HEK293 (cell line): ENCODE measurements at regions of chr21 and their contacts with region 1.

Region 1: DNA sequence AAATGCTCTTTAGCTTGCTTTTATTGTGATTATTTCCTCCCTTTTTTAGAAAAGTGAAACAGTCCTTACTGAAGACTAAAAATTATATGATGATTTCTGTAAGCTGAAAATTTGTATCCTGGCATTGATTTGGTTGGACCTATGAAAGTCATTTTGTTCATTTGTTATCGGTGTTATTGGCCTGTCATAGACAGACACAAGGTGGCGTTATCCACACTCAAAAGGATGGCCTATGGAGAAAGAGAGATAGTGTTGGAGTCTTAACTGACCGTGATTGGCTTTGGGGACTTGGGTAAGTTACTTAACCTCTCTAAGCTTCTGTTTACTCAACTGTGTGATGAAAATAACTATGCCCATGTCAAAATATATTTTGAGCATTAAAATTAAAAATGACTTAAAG is 203.6 kb upstream of the CHODL start:
- H3K4me3 ChIP-seq: no peak overlapping the region
- H3K27ac ChIP-seq: no peak overlapping the region
- H3K4me1 ChIP-seq: no peaks in the 10 kb centered on the region
- CTCF ChIP-seq: no peak

Region 2: GRCh38 chr21:18030248-18030647 is 10.8 kb before region 1 on chr21:
- CTCF ChIA-PET with region 1: interaction called, 13 read pairs
- POLR2A ChIA-PET with region 1: no interaction called
- H3K4me3 ChIP-seq: no peak overlapping the region
- H3K27ac ChIP-seq: no peak overlapping the region
- H3K4me1 ChIP-seq: no peaks in the 10 kb centered on the region
- CTCF ChIP-seq: no peak

Region 3: GRCh38 chr21:18053151-18053550 is 12.1 kb after region 1 on chr21:
- CTCF ChIA-PET with region 1: interaction called, 11 read pairs
- POLR2A ChIA-PET with region 1: no interaction called
- H3K4me3 ChIP-seq: no peak overlapping the region
- H3K27ac ChIP-seq: no peak overlapping the region
- H3K4me1 ChIP-seq: no peaks in the 10 kb centered on the region
- CTCF ChIP-seq: no peak

Region 4: GRCh38 chr21:18666725-18667124 is 625.7 kb after region 1 on chr21:
- CTCF ChIA-PET with region 1: no interaction called
- POLR2A ChIA-PET with region 1: no interaction called
- H3K4me3 ChIP-seq: no peak overlapping the region
- H3K27ac ChIP-seq: no peak overlapping the region
- H3K4me1 ChIP-seq: no peaks in the 10 kb centered on the region
- CTCF ChIP-seq: no peak